ENCODE measurements at regions of chr5 and their contacts with region 1.

Region 1: GRCh38 chr5:179495906-179496455 is 54.4 kb upstream of the RUFY1 start:
- DNase-seq: peak; percentile 48
- H3K4me3 ChIP-seq: no peak overlapping the region
- H3K27ac ChIP-seq: no peak overlapping the region
- H3K4me1 ChIP-seq: peaks cover 0 to 4% of the 10 kb centered on the region in 2 experiments; a peak in 1 of 4 replicates
- H3K27me3 ChIP-seq: no peaks in the 10 kb centered on the region
- CTCF ChIP-seq: no peak
- EP300 ChIP-seq: no peak
- RAD21 ChIP-seq: peak; percentile 48

Region 2: DNA sequence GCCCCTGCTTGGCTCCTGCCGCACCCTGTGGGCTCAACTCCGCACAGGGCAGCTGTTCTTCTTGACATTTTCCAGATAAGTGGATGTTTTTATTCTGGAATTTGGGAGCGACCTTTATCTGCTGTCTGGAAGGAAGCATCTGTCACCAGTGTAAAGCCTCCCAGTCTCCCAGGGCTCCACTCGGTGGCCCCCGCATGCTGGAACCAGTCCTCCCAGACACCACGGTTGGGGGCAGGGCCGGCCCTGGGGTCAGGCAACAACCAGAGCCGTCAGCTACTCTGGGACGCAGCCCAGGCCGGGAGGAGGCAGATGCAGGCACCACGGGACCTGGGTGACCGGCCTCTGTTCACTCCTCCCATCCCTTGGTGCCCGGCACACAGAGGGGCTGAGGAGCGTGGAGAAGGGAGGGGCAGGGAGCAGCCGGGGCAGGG is 58.0 kb before region 1 on chr5:
- CTCF ChIA-PET with region 1: interaction called, 15 read pairs
- POLR2A ChIA-PET with region 1: no interaction called
- DNase-seq: peak; percentile 91
- H3K4me3 ChIP-seq: no peak overlapping the region
- H3K27ac ChIP-seq: peak overlapping the region in 1 of 2 experiments; percentile 99; a peak in 2 of 4 replicates
- H3K4me1 ChIP-seq: peaks cover 0 to 54% of the 10 kb centered on the region in 2 experiments; a peak in 1 of 4 replicates
- H3K27me3 ChIP-seq: no peaks in the 10 kb centered on the region
- CTCF ChIP-seq: no peak
- EP300 ChIP-seq: peak in 1 of 2 experiments; percentile 91; a peak in 2 of 4 replicates
- RAD21 ChIP-seq: peak; percentile 30

Region 3: DNA sequence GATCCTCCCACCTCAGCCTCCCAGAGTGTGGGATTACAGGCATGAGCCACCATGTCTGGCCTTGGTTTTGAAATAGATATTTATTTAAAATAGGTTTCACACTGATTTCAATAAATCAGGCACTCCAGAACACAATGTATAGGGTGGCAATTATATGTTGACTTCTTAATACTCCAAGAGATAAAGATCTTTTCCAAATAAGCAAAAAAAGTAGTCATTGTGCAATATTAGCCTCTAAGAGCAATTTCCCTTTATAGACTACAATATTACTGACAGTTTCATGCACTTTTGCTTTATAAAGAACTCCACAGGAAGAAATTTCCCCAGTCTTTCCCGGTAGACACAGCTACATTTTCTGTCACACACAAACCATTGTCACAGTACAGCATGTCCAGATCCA is 31.0 kb after region 1 on chr5:
- CTCF ChIA-PET with region 1: no interaction called
- POLR2A ChIA-PET with region 1: no interaction called
- DNase-seq: no peak
- H3K4me3 ChIP-seq: no peak overlapping the region
- H3K27ac ChIP-seq: no peak overlapping the region
- H3K4me1 ChIP-seq: no peaks in the 10 kb centered on the region
- H3K27me3 ChIP-seq: no peaks in the 10 kb centered on the region
- CTCF ChIP-seq: no peak
- EP300 ChIP-seq: no peak
- RAD21 ChIP-seq: no peak